ENCODE measurements at regions of chr18 and their contacts with region 1.

Region 1: GRCh38 chr18:55589625-55590291 is 1.8 kb upstream of the TCF4 start:
- DNase-seq: peak; percentile 92
- H3K4me3 ChIP-seq: peak overlapping the region; percentile 22 to 69 (median 58)
- H3K27ac ChIP-seq: peak overlapping the region; percentile 83 to 92 (median 88)
- H3K4me1 ChIP-seq: peaks cover 0 to 28% (median under 1%) of the 10 kb centered on the region in 4 donors
- H3K27me3 ChIP-seq: peaks cover 31% of the 10 kb centered on the region
- CTCF ChIP-seq: no peak
- EP300 ChIP-seq: no peak
- POLR2A ChIP-seq: peak; percentile 46

Region 2: GRCh38 chr18:55048892-55049291 is 540.9 kb before region 1 on chr18:
- in situ Hi-C with region 1: no loop called
- intact Hi-C with region 1: no loop called
- DNase-seq: no peak
- H3K4me3 ChIP-seq: no peak overlapping the region
- H3K27ac ChIP-seq: no peak overlapping the region
- H3K4me1 ChIP-seq: no peaks in the 10 kb centered on the region
- H3K27me3 ChIP-seq: no peaks in the 10 kb centered on the region
- CTCF ChIP-seq: no peak
- EP300 ChIP-seq: no peak
- POLR2A ChIP-seq: no peak

Region 3: GRCh38 chr18:55220523-55220922 is 369.2 kb before region 1 on chr18:
- in situ Hi-C with region 1: loop called in 2 of 4 experiments (anchors 25 kb)
- intact Hi-C with region 1: loop called (anchors 10 kb)
- DNase-seq: no peak
- H3K4me3 ChIP-seq: no peak overlapping the region
- H3K27ac ChIP-seq: no peak overlapping the region
- H3K4me1 ChIP-seq: no peaks in the 10 kb centered on the region
- H3K27me3 ChIP-seq: no peaks in the 10 kb centered on the region
- CTCF ChIP-seq: no peak
- EP300 ChIP-seq: no peak
- POLR2A ChIP-seq: no peak

Region 4: DNA sequence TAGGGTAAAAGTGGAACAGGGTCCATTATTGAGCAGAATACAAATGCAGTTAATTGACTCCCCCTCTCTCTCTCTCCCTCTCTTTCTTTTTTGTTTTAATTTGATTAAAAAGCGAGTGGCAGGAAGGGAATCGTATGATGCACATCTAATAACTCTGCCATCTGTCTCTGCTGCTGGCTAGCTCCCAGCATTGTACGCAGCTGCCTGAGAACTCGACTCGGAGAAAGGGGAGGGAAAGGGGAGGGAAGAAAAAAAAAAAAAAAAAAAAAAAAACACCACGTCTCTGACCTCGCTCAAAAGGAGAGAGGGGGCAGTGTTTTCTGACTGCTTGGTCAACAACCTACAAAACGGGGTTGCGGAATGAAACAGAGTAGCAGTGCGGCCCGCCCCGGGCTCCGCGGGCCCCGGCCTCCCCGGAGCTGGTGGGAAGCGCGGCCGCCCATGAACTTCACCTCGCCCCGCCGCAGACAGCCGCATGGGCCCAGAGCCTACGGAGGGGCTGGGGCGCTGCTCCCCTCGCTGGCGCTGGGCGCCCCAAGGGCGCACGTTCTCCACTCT is 267.5 kb before region 1 on chr18:
- in situ Hi-C with region 1: loop called in 2 of 4 experiments (anchors 10 to 25 kb)
- intact Hi-C with region 1: no loop called
- DNase-seq: peak; percentile 75
- H3K4me3 ChIP-seq: peak overlapping the region; percentile 27 to 52 (median 45)
- H3K27ac ChIP-seq: peak overlapping the region; percentile 87 to 94 (median 92)
- H3K4me1 ChIP-seq: peaks cover 1 to 31% (median 3%) of the 10 kb centered on the region in 4 donors
- H3K27me3 ChIP-seq: peaks cover 16% of the 10 kb centered on the region
- CTCF ChIP-seq: no peak
- EP300 ChIP-seq: no peak
- POLR2A ChIP-seq: peak; percentile 71

Region 5: GRCh38 chr18:55415258-55415871 is 174.4 kb before region 1 on chr18:
- in situ Hi-C with region 1: loop called in 2 of 4 experiments (anchors 10 to 25 kb)
- intact Hi-C with region 1: loop called (anchors 5 kb)
- DNase-seq: peak; percentile 82
- H3K4me3 ChIP-seq: no peak overlapping the region
- H3K27ac ChIP-seq: no peak overlapping the region
- H3K4me1 ChIP-seq: peaks cover 0 to 19% (median 0%) of the 10 kb centered on the region in 4 donors
- H3K27me3 ChIP-seq: no peaks in the 10 kb centered on the region
- CTCF ChIP-seq: peak; percentile 77 to 89 (median 87)
- EP300 ChIP-seq: no peak
- POLR2A ChIP-seq: no peak

Region 6: GRCh38 chr18:55477499-55477859 is 112.3 kb before region 1 on chr18:
- in situ Hi-C with region 1: no loop called
- intact Hi-C with region 1: loop called (anchors 10 kb)
- DNase-seq: no peak
- H3K4me3 ChIP-seq: peak overlapping the region; percentile 23 to 44 (median 26)
- H3K27ac ChIP-seq: peak overlapping the region; percentile 74 to 83 (median 78)
- H3K4me1 ChIP-seq: peaks cover 0 to 11% (median 3%) of the 10 kb centered on the region in 4 donors
- H3K27me3 ChIP-seq: no peaks in the 10 kb centered on the region
- CTCF ChIP-seq: peak in 2 of 5 experiments; percentile 12 to 13
- EP300 ChIP-seq: no peak
- POLR2A ChIP-seq: no peak

Region 7: DNA sequence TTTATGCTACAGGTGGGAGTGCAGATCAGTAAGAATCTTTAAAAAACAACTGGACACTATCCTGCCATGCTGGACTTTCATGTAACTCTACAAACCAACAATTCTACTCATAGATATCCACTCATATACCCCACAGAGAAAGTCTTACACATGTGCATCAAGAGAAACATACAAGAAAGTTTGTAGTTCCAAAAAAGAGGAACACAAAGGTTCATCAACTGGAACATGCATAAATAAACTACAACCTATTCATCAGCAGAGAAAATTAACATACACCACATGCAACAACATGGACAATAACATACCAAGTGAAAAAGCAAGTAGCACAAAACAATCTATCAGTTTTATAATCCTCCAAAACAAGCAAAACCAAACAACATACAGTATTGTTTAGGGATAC is 18.8 kb before region 1 on chr18:
- in situ Hi-C with region 1: no loop called
- intact Hi-C with region 1: no loop called
- DNase-seq: no peak
- H3K4me3 ChIP-seq: no peak overlapping the region
- H3K27ac ChIP-seq: no peak overlapping the region
- H3K4me1 ChIP-seq: no peaks in the 10 kb centered on the region
- H3K27me3 ChIP-seq: no peaks in the 10 kb centered on the region
- CTCF ChIP-seq: no peak
- EP300 ChIP-seq: no peak
- POLR2A ChIP-seq: no peak